Transverse colon (tissue), 4 donors: ENCODE measurements at regions of chr10 and their contacts with region 1.

Region 1: GRCh38 chr10:10792681-10793080 is 225.0 kb upstream of the CELF2 start:
- DNase-seq: no peak
- H3K4me3 ChIP-seq: no peak overlapping the region
- H3K27ac ChIP-seq: peak overlapping the region in 2 of 4 donors; percentile 18 to 23
- H3K4me1 ChIP-seq: peaks cover 0 to 13% (median 6%) of the 10 kb centered on the region in 4 donors
- H3K27me3 ChIP-seq: no peaks in the 10 kb centered on the region
- CTCF ChIP-seq: no peak
- EP300 ChIP-seq: no peak
- POLR2A ChIP-seq: no peak

Region 2: GRCh38 chr10:10872035-10872673 is 79.5 kb after region 1 on chr10:
- in situ Hi-C with region 1: no loop called
- intact Hi-C with region 1: loop called (anchors 10 kb)
- DNase-seq: no peak
- H3K4me3 ChIP-seq: no peak overlapping the region
- H3K27ac ChIP-seq: peak overlapping the region; percentile 60 to 77 (median 69)
- H3K4me1 ChIP-seq: peaks cover 3 to 21% (median 18%) of the 10 kb centered on the region in 4 donors
- H3K27me3 ChIP-seq: no peaks in the 10 kb centered on the region
- CTCF ChIP-seq: no peak
- EP300 ChIP-seq: no peak
- POLR2A ChIP-seq: no peak